AG04450 (cell line): ENCODE measurements at regions of chr3 and their contacts with region 1.

Region 1: DNA sequence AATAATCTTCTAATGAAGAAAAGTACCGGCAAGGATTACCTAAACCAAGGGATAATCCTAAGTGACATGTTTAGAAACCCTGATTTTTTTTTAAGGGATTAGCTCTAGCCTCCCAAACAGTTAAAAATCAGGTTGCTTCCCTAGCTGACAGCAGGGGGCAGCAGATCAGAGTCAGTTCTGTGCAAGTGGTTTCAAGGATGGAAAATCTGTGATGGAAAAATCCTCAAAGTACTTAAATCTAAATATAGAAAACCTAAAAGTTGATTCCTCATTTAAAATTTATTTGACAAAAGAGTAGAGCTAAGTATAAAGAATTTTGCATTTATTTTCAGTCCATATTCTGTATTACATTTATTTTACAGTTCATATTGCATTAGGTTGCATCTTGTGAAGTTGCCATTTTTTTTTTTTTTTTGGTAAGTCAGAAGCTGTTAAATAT is 107.6 kb downstream of the PEX5L start:
- DNase-seq: peak; percentile 36
- H3K4me3 ChIP-seq: no peak overlapping the region
- H3K27ac ChIP-seq: no peak overlapping the region
- H3K27me3 ChIP-seq: no peaks in the 10 kb centered on the region
- CTCF ChIP-seq: peak; percentile 91

Region 2: GRCh38 chr3:179811321-179812095 is 117.6 kb before region 1 on chr3:
- CTCF ChIA-PET with region 1: interaction called, 32 read pairs
- POLR2A ChIA-PET with region 1: no interaction called
- DNase-seq: peak; percentile 65
- H3K4me3 ChIP-seq: peak overlapping the region; percentile 36; the same call in 1 of the 2 replicates
- H3K27ac ChIP-seq: peak overlapping the region; percentile 82
- H3K27me3 ChIP-seq: no peaks in the 10 kb centered on the region
- CTCF ChIP-seq: peak; percentile 74

Region 3: DNA sequence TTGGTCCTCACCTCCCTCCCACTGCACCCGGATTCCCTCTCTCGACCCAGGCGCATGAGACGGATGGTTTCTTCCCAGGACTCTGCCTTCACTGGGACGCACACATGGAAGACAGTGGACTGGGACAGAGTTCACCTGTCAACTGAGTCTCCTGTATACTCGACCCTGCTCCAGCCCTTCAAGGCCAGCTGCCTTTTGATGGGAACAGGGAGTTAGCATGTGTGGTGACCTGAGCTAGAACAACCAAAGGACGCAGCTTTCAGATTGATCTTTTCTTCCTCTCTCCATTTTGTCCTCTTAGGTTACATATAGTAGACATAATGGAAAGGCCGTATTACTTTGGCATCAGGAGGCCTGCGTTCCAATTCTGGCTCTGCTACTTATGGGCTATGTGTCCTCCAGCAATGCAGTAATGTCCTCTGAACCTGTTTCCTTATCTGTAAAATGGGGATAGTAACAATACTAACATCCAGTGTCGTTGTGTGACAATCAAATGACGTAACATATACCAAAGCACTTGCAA is 13.5 kb after region 1 on chr3:
- CTCF ChIA-PET with region 1: interaction called, 18 read pairs
- POLR2A ChIA-PET with region 1: no interaction called
- DNase-seq: no peak
- H3K4me3 ChIP-seq: peak overlapping the region; percentile 55
- H3K27ac ChIP-seq: no peak overlapping the region
- H3K27me3 ChIP-seq: no peaks in the 10 kb centered on the region
- CTCF ChIP-seq: no peak

Region 4: DNA sequence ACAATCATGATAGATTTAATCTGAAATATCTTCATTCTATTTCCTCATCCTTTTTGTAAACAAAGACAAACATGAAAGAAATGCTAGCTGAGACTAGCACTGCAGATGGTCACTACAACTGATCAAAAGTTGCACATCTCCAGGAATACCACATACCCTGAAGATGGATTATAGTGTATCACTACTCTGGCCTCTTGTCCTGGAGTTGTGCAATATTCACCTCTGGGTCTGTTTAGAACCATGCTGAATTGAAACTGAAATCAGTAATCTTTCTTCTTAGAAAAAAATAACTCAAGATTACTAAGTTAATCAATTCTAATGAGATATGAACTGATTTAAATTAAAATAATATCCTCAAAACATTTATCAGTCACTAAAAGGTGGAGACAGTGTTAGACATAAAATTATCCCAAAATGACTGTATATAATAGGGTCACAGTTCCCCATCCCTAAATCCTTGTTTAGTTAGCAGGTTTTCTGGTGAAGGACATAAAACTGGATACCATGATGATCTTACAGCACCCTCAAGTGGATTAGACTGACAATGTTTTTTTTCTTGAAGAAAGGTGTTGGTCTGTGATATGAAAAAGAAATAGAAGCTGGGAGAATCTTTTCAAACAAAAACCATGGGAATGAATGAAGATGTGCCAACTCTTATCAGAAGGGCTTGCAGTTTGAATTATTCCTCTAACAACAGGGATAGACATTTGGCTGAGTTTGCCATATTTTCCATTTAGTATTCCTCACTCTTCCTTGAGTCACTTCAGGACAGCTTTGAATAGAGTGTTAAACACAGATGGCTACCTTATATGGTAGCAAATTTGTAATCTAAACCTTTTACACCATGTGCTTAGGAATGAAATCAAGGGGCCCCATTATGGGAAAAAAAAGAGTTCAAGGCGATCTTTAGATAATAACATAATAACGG is 665.8 kb after region 1 on chr3:
- CTCF ChIA-PET with region 1: interaction called, 172 read pairs
- POLR2A ChIA-PET with region 1: interaction called, 3 read pairs
- DNase-seq: peak; percentile 37
- H3K4me3 ChIP-seq: no peak overlapping the region
- H3K27ac ChIP-seq: no peak overlapping the region
- H3K27me3 ChIP-seq: no peaks in the 10 kb centered on the region
- CTCF ChIP-seq: peak; percentile 68

Region 5: GRCh38 chr3:180679178-180680096 is 750.3 kb after region 1 on chr3 and contains the start of gene CCDC39:
- CTCF ChIA-PET with region 1: interaction called, 13 read pairs
- POLR2A ChIA-PET with region 1: no interaction called
- DNase-seq: peak; percentile 8
- H3K4me3 ChIP-seq: peak within 1 kb of the TSS; percentile 77
- H3K27ac ChIP-seq: no peak within 1 kb of the TSS
- H3K27me3 ChIP-seq: peaks cover 10% of the 10 kb centered on the region
- CTCF ChIP-seq: no peak
- polyA plus RNA-seq, gene CCDC39: not detected in 2 replicates